PC-3 (cell line): ENCODE measurements at regions of chr12 and their contacts with region 1.

Region 1: GRCh38 chr12:57803319-57803893 is 15.1 kb downstream of the AVIL start:
- DNase-seq: peak; percentile 60
- ATAC-seq: peak; percentile 60
- H3K4me3 ChIP-seq: no peak overlapping the region
- H3K27ac ChIP-seq: no peak overlapping the region
- H3K4me1 ChIP-seq: no peaks in the 10 kb centered on the region
- H3K27me3 ChIP-seq: no peaks in the 10 kb centered on the region
- CTCF ChIP-seq: peak; percentile 82

Region 2: DNA sequence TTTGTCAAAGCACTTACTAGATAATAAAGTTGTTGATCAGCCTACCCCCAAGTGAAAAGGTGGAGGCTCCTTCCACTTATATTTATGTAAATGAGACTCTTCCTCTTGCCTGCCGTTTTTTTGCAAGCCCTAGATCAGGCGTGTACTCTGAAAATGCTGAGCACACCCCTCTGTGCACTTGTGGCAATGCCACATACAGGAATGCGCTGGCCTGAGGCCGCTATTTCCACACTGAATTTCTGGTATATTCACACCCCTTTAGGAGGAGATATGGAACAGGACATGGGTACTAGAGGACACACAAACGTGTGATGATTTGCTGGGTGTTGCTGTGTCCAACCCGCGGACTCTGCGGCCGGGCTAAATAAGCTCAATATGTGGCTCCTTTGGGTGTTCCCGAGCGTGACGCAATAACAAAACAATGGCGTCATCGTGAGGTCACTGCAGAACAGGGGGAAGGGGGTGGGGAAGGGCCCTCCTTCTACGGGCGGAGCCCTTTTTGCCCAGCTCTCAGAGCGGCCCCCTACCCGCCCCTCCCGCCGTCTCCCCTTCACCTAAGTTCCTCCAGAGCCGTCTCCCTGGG is 59.1 kb before region 1 on chr12:
- CTCF ChIA-PET with region 1: no interaction called
- POLR2A ChIA-PET with region 1: no interaction called
- intact Hi-C with region 1: no loop called
- DNase-seq: no peak
- ATAC-seq: no peak; the same call in 1 of the 2 replicates
- H3K4me3 ChIP-seq: peak overlapping the region; percentile 86
- H3K27ac ChIP-seq: no peak overlapping the region
- H3K4me1 ChIP-seq: no peaks in the 10 kb centered on the region; the same call in 1 of the 2 replicates
- H3K27me3 ChIP-seq: peaks cover 7% of the 10 kb centered on the region
- CTCF ChIP-seq: no peak

Region 3: DNA sequence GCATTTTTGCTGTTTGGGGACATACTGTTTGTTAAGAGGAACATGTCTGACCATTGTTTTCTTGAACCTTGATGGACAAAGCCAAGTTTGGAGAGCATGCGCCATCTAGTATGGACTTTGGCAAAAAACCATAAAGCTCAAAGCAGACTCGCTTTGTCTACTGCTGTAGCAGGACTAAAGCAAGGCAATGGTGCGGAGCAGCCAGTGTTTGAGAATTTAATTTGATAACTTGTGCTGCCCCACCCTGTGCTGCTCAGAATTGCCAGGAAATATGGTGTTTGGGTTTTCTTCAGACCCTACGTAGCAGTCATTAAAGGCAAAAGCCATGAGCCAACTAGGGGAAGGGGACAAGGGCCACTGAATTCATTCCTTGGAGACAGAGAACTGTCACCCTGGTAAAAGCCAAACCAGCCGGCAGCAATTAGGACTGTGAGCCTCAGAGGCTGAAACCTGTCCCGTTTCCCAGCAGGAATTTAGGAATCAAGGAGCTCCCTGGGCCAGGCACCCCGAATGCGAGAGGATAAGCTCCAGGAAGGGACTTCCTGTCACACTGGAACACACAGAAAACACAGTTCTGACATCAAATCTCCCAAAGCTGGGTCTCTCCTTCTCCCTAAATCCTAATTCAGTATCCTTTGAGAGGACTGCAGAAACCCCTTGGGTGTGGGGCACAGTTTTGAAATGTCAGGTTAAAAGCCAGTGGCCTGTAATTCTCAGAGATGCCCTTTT is 14.0 kb after region 1 on chr12:
- CTCF ChIA-PET with region 1: interaction called, 12 read pairs
- POLR2A ChIA-PET with region 1: no interaction called
- intact Hi-C with region 1: no loop called
- DNase-seq: no peak
- ATAC-seq: no peak
- H3K4me3 ChIP-seq: no peak overlapping the region
- H3K27ac ChIP-seq: no peak overlapping the region
- H3K4me1 ChIP-seq: peaks cover 5% of the 10 kb centered on the region; the same call in 1 of the 2 replicates
- H3K27me3 ChIP-seq: no peaks in the 10 kb centered on the region
- CTCF ChIP-seq: no peak

Region 4: GRCh38 chr12:57918147-57918546 is 114.7 kb after region 1 on chr12:
- CTCF ChIA-PET with region 1: no interaction called
- POLR2A ChIA-PET with region 1: no interaction called
- intact Hi-C with region 1: no loop called
- DNase-seq: no peak
- ATAC-seq: no peak
- H3K4me3 ChIP-seq: no peak overlapping the region
- H3K27ac ChIP-seq: no peak overlapping the region
- H3K4me1 ChIP-seq: no peaks in the 10 kb centered on the region
- H3K27me3 ChIP-seq: no peaks in the 10 kb centered on the region
- CTCF ChIP-seq: no peak